Activated CD4-positive, alpha-beta memory T cell treated with anti-CD3 and anti-CD28 coated beads for 36 hours (primary cell): ENCODE measurements at regions of chr16 and their contacts with region 1.

Region 1: GRCh38 chr16:11370084-11370931 is 25.0 kb downstream of the RMI2 start:
- DNase-seq: peak; percentile 38
- H3K4me3 Mint-ChIP-seq: no peak overlapping the region
- H3K27ac Mint-ChIP-seq: no peak overlapping the region
- H3K4me1 Mint-ChIP-seq: peaks cover 11% of the 10 kb centered on the region
- H3K27me3 Mint-ChIP-seq: no peaks in the 10 kb centered on the region

Region 2: GRCh38 chr16:10957771-10958486 is 412.4 kb before region 1 on chr16:
- CTCF ChIA-PET with region 1: interaction called, 10 read pairs
- POLR2A ChIA-PET with region 1: no interaction called
- intact Hi-C with region 1: no loop called
- DNase-seq: peak; percentile 65
- H3K4me3 Mint-ChIP-seq: peak overlapping the region; percentile 7
- H3K27ac Mint-ChIP-seq: peak overlapping the region; percentile 87
- H3K4me1 Mint-ChIP-seq: peaks cover 73% of the 10 kb centered on the region
- H3K27me3 Mint-ChIP-seq: no peaks in the 10 kb centered on the region

Region 3: DNA sequence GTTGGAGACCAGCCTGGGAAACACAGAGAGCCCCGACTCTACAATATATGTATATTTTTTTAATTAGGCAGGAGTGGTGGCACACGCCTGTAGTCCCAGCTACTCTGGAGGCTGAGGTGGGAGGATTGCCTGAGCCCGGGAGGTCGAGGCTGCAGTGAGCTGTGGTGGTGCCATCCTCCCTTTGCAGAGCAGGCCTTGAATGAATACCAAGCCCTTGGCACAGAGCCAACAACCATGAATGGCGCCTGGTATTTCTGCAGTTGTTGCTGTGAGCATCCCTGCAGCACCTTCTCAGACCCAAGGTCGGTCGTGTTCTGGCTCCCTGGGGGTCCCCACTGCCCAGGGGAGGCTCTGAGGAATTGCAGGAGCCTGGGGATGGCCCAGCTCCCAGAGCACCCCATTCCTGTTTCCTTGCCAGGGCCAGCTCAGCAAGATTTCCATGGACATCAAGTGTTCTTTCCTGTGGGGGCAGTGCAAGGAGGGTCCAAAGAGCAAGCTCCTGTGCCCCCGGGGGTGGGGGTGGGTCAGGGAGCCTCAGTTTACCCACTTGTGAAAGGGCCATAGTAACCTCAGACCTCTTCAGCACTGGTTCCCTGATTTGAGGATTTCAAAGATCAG is 50.7 kb before region 1 on chr16:
- CTCF ChIA-PET with region 1: no interaction called
- POLR2A ChIA-PET with region 1: no interaction called
- intact Hi-C with region 1: no loop called
- DNase-seq: peak; percentile 29
- H3K4me3 Mint-ChIP-seq: no peak overlapping the region
- H3K27ac Mint-ChIP-seq: no peak overlapping the region
- H3K4me1 Mint-ChIP-seq: peaks cover 3% of the 10 kb centered on the region
- H3K27me3 Mint-ChIP-seq: no peaks in the 10 kb centered on the region

Region 4: DNA sequence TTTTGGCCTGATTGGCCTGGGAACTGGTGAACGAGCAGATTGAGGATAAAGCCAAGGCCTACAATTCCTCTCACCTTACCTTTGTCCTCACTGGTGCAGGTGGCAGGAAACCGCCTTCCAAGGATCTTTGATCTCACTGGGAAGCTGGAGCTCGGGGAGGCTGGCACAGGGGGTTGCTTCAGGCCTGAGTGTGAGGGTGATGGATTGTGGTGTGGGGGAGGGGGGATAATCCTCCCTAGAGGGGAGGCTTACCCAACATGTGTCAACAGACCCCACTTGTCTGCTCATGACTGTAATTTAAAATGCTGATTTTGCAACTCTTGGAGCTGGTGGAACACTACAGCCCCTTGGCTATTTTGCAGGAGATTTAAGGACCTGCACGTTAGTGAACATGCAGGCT is 29.6 kb before region 1 on chr16:
- CTCF ChIA-PET with region 1: no interaction called
- POLR2A ChIA-PET with region 1: no interaction called
- intact Hi-C with region 1: no loop called
- DNase-seq: no peak
- H3K4me3 Mint-ChIP-seq: no peak overlapping the region
- H3K27ac Mint-ChIP-seq: no peak overlapping the region
- H3K4me1 Mint-ChIP-seq: peaks cover 21% of the 10 kb centered on the region
- H3K27me3 Mint-ChIP-seq: no peaks in the 10 kb centered on the region

Region 5: DNA sequence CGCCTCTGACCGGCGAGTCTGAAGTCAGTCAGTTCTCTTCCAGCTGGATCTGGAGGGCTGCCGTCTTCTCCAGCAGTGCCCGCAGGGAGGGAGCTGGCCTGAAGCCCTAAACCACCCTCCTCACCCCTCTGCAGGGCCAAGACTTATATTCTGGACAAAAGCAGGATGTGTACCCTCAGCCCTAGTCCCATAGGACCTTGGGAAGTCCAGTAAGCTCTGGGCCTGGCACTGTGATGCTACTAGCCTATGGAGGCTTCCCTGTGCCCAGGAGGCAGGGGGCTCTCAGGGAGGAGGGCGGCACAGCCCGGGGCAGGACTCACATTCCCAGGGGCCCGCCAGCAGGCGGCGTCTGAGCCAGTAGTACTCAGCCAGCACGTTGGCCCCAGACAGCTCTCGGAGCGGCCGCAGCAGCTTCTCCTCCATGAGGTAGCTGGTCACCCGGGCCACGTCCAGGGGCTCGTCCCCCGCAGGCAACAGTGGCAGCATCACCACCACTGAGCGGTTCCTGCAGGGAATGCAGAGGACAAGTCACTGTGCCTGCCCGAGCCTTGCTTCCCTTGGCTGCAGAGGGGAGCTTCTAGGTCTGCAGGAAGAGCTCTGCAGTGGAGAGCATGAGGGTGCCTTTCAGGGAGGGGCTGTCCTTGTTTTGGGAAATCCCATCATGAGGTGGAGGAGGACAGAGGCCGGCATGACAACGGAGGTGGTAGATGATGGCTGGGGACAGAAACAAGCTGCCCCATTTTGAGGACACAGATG is 16.7 kb after region 1 on chr16:
- CTCF ChIA-PET with region 1: interaction called, 13 read pairs
- POLR2A ChIA-PET with region 1: no interaction called
- intact Hi-C with region 1: no loop called
- DNase-seq: no peak
- H3K4me3 Mint-ChIP-seq: no peak overlapping the region
- H3K27ac Mint-ChIP-seq: no peak overlapping the region
- H3K4me1 Mint-ChIP-seq: peaks cover 2% of the 10 kb centered on the region
- H3K27me3 Mint-ChIP-seq: peaks cover 4% of the 10 kb centered on the region

Region 6: GRCh38 chr16:11396241-11397048 is 26.1 kb after region 1 on chr16:
- CTCF ChIA-PET with region 1: interaction called, 10 read pairs
- POLR2A ChIA-PET with region 1: no interaction called
- intact Hi-C with region 1: no loop called
- DNase-seq: peak; percentile 76
- H3K4me3 Mint-ChIP-seq: no peak overlapping the region
- H3K27ac Mint-ChIP-seq: no peak overlapping the region
- H3K4me1 Mint-ChIP-seq: no peaks in the 10 kb centered on the region
- H3K27me3 Mint-ChIP-seq: no peaks in the 10 kb centered on the region